ENCODE measurements at regions of chr5 and their contacts with region 1.

Region 1: GRCh38 chr5:73189871-73190376 is 16.9 kb downstream of the TMEM174 start:
- DNase-seq: peak; percentile 50
- ATAC-seq: peak; percentile 61
- H3K4me3 Mint-ChIP-seq: no peak overlapping the region
- H3K27ac Mint-ChIP-seq: no peak overlapping the region
- H3K4me1 Mint-ChIP-seq: peaks cover 20% of the 10 kb centered on the region
- H3K27me3 Mint-ChIP-seq: no peaks in the 10 kb centered on the region
- CTCF ChIP-seq: no peak

Region 2: DNA sequence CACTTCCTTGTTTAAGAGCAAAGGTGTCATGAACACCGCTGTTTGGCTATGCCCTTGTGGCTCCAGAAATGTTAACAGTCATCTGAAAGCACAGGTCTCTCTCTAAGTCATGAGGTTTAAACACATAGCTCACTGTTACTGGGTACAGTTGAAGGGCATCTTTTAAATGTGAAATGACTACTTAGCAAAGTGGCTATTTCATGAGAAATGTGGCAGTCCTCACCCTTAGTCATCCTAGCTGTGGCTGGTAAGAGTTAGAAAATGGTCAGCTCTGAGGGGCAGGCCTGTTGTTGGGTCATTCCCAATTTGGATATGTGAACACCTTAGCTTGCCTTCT is 93.7 kb before region 1 on chr5:
- CTCF ChIA-PET with region 1: no interaction called
- POLR2A ChIA-PET with region 1: interaction called, 14 read pairs
- DNase-seq: no peak
- ATAC-seq: no peak
- H3K4me3 Mint-ChIP-seq: no peak overlapping the region
- H3K27ac Mint-ChIP-seq: no peak overlapping the region
- H3K4me1 Mint-ChIP-seq: 0 out of 2 replicates have a peak, but pooled peaks cover 2% of the 10 kb centered on the region
- H3K27me3 Mint-ChIP-seq: no peaks in the 10 kb centered on the region; the same call in 1 of the 2 replicates
- CTCF ChIP-seq: no peak

Region 3: GRCh38 chr5:73135429-73136054 is 54.4 kb before region 1 on chr5:
- CTCF ChIA-PET with region 1: no interaction called
- POLR2A ChIA-PET with region 1: no interaction called
- DNase-seq: peak; percentile 31
- ATAC-seq: peak; percentile 77
- H3K4me3 Mint-ChIP-seq: no peak overlapping the region
- H3K27ac Mint-ChIP-seq: no peak overlapping the region
- H3K4me1 Mint-ChIP-seq: peaks cover 27% of the 10 kb centered on the region
- H3K27me3 Mint-ChIP-seq: no peaks in the 10 kb centered on the region
- CTCF ChIP-seq: peak; percentile 39; the same call in 1 of the 2 replicates

Region 4: DNA sequence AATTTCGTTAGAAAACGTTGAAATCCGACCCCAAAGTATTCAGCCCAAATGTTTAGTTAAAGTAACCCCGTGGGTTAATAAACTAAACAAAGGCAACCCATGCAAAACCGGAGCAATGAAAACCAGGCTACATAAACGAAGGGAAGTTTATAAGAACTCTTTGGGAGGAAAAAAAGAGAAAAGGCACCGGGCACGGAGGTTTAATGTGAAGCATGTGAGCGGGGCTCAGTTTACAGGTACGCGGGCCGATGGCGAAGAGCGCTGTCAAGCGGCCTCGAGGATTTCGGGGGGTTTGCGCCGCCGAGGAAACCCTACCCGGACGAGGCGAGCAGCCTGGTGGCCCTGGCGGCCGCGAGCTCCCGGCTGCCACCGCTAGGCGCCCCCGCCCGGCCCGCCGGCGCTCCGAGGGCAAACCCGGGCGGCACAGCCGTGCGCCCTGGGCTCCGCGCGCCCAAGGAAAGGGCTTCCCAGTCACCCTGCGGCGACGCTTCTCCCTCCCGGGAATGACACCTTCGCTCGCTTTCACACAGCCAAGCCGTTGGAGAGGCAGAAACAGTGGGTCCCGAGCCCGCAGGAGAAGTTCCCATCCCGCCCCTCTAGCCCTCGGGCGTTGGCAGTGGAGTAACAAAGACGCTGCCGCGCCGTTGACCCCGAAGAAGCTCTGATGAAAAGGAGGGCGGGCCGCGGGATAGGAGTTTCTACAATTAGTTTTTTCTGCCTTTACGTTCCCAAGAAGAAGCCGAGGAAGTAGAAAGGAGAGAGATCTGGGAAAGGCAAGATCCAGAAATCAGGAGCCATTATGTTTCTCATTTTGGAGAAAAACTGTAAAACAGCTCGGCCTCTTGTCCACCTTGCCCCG is 109.1 kb after region 1 on chr5:
- CTCF ChIA-PET with region 1: no interaction called
- POLR2A ChIA-PET with region 1: no interaction called
- DNase-seq: peak; percentile 62
- ATAC-seq: peak; percentile 38
- H3K4me3 Mint-ChIP-seq: peak overlapping the region; percentile 69
- H3K27ac Mint-ChIP-seq: no peak overlapping the region
- H3K4me1 Mint-ChIP-seq: peaks cover 54% of the 10 kb centered on the region
- H3K27me3 Mint-ChIP-seq: peaks cover 100% of the 10 kb centered on the region
- CTCF ChIP-seq: no peak

Measured in WTC11 (cell line).